Right cardiac atrium (tissue), 5 donors: ENCODE measurements at regions of chr10 and their contacts with region 1.

Region 1: GRCh38 chr10:30534465-30535144 is 94.9 kb downstream of the LYZL2 start:
- DNase-seq: peak; percentile 49 to 81 (median 63)
- ATAC-seq: peak; percentile 57 to 71
- H3K4me3 ChIP-seq: no peak overlapping the region
- H3K27ac ChIP-seq: no peak overlapping the region
- H3K4me1 ChIP-seq: no peaks in the 10 kb centered on the region
- H3K27me3 ChIP-seq: no peaks in the 10 kb centered on the region

Region 2: DNA sequence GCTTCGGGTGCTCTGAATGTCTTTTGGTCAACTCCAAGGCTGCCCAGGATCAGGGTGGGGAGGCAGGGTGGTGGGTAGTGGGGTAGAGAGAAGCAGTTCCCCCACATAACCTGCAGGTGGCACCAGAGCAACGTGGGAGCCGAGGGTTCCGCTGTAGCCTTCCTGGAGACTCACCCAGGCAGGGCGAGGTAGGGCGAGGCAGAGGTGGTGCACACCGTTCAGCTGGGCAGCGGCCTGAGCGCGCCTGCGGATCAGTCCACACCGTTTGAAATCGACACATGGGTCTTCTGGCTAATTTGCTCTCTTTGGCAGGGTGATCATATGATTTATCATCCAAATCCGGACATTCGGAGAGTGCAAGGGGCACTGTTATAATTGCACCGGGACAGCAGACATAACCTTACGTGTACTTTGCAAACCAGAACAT is 142.0 kb before region 1 on chr10:
- intact Hi-C with region 1: loop called (anchors 5 kb)
- DNase-seq: peak; percentile 73 to 88 (median 87)
- ATAC-seq: peak; percentile 94 to 98
- H3K4me3 ChIP-seq: no peak overlapping the region
- H3K27ac ChIP-seq: no peak overlapping the region
- H3K4me1 ChIP-seq: peaks cover 2% of the 10 kb centered on the region
- H3K27me3 ChIP-seq: no peaks in the 10 kb centered on the region

Region 3: DNA sequence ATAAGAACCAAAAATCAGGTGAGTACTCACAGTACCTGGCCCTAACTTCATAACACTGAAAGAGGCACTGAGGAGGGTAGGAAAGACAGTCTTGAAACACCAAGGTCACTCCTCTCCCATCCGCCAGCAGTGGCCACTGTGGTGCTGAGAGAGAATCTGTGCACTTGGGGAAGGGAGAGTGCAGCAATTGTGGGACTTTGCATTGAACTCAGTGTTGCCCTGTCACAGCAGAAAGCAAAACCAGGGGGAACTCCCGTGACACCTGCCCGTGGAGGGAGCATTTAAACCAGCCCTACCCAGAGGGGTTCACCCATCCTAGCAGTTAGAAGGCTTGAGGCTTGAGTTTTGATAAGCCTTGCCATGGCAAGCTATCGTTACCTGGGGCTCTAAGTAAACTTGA is 135.8 kb before region 1 on chr10:
- intact Hi-C with region 1: loop called (anchors 5 kb)
- DNase-seq: no peak
- ATAC-seq: no peak
- H3K4me3 ChIP-seq: no peak overlapping the region
- H3K27ac ChIP-seq: no peak overlapping the region
- H3K4me1 ChIP-seq: peaks cover 2% of the 10 kb centered on the region
- H3K27me3 ChIP-seq: no peaks in the 10 kb centered on the region

Region 4: GRCh38 chr10:30413996-30414576 is 120.5 kb before region 1 on chr10:
- intact Hi-C with region 1: loop called in 3 of 4 experiments (anchors 2 to 5 kb)
- DNase-seq: no peak
- ATAC-seq: peak; percentile 70 to 77
- H3K4me3 ChIP-seq: no peak overlapping the region
- H3K27ac ChIP-seq: no peak overlapping the region
- H3K4me1 ChIP-seq: peaks cover 2% of the 10 kb centered on the region
- H3K27me3 ChIP-seq: no peaks in the 10 kb centered on the region

Region 5: DNA sequence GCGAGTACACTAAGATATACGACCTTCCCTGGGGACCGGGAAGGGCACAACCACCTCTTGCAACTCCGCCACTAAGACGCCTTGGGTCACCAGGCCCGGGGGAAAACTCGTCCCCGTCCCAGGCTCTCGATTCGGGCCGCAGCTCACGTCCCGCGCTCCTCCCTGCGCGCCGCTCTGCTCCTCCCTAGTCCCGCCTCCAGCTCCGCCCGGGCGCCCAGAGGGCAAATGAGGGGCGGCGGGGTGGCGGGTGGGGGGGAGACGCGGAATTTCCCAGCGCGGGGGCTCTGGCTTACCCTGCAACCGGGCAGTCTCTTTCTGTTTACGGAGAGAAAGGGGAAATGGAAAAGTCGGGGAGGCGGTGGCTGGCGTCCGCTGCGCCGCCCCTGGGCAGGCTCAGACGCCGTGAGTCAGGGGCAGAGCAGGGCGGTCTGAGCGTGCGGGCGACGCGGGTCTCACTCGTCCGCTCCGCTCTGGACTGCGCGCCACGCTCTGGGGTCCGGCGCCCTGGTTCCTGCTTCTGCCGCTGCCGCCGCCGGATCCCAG is 100.8 kb before region 1 on chr10 and contains the start of gene MAP3K8:
- intact Hi-C with region 1: loop called in 1 of 4 experiments (anchors 5 kb)
- DNase-seq: peak; percentile 93 to 97 (median 97)
- ATAC-seq: peak; percentile 91 to 93
- H3K4me3 ChIP-seq: peak within 1 kb of the TSS; percentile 70
- H3K27ac ChIP-seq: peak within 1 kb of the TSS; percentile 94
- H3K4me1 ChIP-seq: peaks cover 7% of the 10 kb centered on the region
- H3K27me3 ChIP-seq: no peaks in the 10 kb centered on the region
- total RNA-seq, gene MAP3K8: 7.7 to 17.2 (median 9.6) TPM

Region 6: DNA sequence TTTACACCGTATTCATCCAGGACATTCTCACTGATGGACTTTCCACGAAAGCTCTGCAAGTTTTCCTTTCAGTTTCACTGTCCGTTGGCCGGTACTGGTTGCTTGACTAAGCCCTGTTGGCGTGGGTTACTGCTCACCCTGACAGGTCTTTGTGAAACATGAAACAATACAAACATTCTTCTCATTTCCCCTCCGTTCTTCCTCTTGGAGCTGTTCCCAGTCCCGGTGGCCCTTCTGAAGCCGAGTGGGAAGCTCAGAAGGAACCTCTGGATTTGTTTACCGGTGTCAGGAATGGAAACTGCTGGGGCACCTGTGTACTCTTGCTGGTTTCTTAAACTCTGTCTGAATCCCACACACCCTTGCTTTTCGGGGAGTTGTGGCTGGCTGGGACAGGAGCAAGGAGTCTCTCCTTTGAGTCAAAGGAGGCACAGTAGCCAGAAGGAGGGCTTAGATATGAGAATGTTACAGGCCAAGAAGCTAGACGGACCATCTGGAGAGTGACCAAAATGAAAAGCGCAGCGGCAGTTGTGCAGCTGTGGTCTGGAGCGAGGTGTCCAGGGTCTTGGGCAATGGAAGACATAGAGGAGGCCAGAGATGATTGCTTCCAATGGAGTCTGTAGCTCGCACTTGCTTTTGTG is 49.3 kb after region 1 on chr10:
- intact Hi-C with region 1: loop called in 2 of 4 experiments (anchors 10 kb)
- DNase-seq: peak; percentile 59 to 81 (median 73)
- ATAC-seq: peak; percentile 88 to 94
- H3K4me3 ChIP-seq: peak overlapping the region; percentile 58
- H3K27ac ChIP-seq: peak overlapping the region; percentile 95
- H3K4me1 ChIP-seq: peaks cover 5% of the 10 kb centered on the region
- H3K27me3 ChIP-seq: no peaks in the 10 kb centered on the region